Endothelial cell of umbilical vein (primary cell): ENCODE measurements at regions of chr2 and their contacts with region 1.

Region 1: DNA sequence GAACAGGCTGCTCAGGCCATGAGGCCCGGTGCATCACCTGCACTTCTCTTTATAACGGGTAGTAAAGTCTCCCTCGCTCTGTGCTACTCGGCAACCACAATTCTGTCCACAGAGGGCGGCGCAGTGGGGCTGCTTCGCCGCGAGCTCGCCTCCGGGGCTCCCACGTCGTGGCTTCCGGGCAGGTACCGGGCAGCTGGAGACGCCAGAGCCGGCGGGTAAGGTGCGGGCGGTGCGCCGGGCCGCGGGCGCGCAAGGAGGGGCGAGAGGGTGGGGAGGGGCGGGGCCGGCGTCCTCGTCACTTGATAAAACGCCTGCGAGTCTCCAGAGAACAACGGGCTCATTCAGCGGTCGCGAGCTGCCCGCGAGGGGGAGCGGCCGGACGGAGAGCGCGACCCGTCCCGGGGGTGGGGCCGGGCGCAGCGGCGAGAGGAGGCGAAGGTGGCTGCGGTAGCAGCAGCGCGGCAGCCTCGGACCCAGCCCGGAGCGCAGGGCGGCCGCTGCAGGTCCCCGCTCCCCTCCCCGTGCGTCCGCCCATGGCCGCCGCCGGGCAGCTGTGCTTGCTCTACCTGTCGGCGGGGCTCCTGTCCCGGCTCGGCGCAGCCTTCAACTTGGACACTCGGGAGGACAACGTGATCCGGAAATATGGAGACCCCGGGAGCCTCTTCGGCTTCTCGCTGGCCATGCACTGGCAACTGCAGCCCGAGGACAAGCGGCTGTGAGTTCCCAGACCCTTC is at the start of gene ITGA6:
- DNase-seq: peak; percentile 78
- H3K4me3 ChIP-seq: peak within 1 kb of the TSS; percentile 67 to 98 (median 68)
- H3K27ac ChIP-seq: peak within 1 kb of the TSS; percentile 52
- H3K4me1 ChIP-seq: peaks cover 40% of the 10 kb centered on the region
- H3K27me3 ChIP-seq: no peaks in the 10 kb centered on the region
- CTCF ChIP-seq: peak; percentile 4 to 33
- POLR2A ChIP-seq: peak; percentile 87
- total RNA-seq, gene ITGA6: 174 and 208 TPM in 2 replicates

Region 2: GRCh38 chr2:172172513-172173173 is 254.8 kb before region 1 on chr2:
- CTCF ChIA-PET with region 1: interaction called, 11 read pairs
- POLR2A ChIA-PET with region 1: no interaction called
- dilution Hi-C with region 1: loop called (anchors 25 kb)
- intact Hi-C with region 1: loop called (anchors 1 kb)
- DNase-seq: peak; percentile 52
- H3K4me3 ChIP-seq: peak overlapping the region; percentile 12 to 50 (median 50)
- H3K27ac ChIP-seq: no peak overlapping the region
- H3K4me1 ChIP-seq: peaks cover 4% of the 10 kb centered on the region
- H3K27me3 ChIP-seq: no peaks in the 10 kb centered on the region
- CTCF ChIP-seq: peak; percentile 83 to 90
- POLR2A ChIP-seq: no peak

Region 3: DNA sequence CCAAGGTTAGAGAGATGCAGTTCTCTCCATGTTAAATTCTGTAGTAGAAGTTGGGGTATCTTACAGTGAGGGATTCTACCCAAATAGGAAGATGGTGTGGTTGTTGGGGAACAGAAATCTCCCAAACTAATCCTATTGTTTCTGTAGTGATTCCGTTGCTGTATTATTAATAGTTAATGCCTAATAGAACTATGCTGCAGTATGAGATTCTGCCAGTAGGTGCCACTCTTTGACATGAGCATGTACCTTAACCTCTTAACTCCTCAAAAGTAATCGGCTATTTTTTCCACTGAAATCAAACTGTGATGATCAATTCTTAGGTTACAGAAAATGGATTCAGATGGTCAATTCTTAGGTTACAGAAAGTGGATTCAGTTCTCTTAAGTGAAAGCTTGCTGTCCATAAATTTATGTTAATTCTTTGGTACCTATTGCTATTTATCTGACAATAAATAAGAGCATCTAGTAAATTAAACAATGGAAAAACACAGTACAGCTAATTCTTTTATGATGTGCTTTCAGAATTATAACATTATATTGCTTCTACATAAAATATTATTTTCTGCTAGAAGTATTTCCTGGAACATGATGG is 226.8 kb before region 1 on chr2:
- CTCF ChIA-PET with region 1: no interaction called
- POLR2A ChIA-PET with region 1: no interaction called
- dilution Hi-C with region 1: loop called (anchors 25 kb)
- intact Hi-C with region 1: no loop called
- DNase-seq: peak; percentile 53
- H3K4me3 ChIP-seq: no peak overlapping the region
- H3K27ac ChIP-seq: no peak overlapping the region
- H3K4me1 ChIP-seq: no peaks in the 10 kb centered on the region
- H3K27me3 ChIP-seq: no peaks in the 10 kb centered on the region
- CTCF ChIP-seq: peak; percentile 42 to 47
- POLR2A ChIP-seq: no peak

Region 4: DNA sequence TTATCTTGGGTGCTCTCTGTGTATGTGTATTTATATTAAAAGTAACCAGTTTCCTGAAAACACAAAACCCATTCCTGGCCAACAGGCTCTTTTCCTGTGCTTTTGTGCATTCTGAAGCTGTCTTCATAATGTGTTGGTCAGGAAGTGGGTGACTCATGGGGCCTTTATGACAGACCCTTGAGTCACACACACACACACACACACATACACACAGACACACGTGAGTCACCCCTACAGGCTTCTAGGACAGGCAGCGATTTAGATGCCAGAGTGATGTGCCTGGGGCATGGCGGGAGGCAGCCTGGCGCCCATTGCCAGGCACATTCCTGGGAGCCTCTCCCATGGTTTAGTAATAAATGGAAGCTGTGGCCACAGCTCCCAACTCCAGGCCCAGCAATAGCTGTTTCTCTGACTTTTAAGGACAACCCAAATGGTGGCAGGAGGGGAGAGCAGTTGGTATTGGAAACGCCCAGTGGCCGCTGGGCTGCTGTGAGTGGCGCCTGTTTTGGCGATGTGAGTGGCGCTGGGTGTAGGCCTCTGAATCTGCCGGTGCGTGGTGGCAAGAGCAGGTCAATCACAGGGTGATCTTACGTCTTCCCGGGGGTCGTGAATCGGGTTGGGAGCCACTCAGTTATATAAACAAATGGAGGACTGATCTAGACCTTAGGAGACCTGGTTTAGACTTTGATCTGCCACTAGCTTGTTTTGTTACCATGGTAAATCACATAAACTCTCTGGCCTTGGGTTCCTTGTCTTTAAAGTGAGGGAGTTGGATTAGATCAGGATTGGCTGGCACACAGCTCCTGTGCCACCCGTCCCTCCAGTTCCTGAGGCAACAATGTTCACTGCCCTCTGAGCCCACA is 174.0 kb before region 1 on chr2:
- CTCF ChIA-PET with region 1: interaction called, 4 read pairs
- POLR2A ChIA-PET with region 1: no interaction called
- dilution Hi-C with region 1: no loop called
- intact Hi-C with region 1: loop called (anchors 5 kb)
- DNase-seq: peak; percentile 99
- H3K4me3 ChIP-seq: no peak overlapping the region
- H3K27ac ChIP-seq: peak overlapping the region; percentile 95
- H3K4me1 ChIP-seq: peaks cover 54% of the 10 kb centered on the region
- H3K27me3 ChIP-seq: no peaks in the 10 kb centered on the region
- CTCF ChIP-seq: no peak
- POLR2A ChIP-seq: peak; percentile 68

Region 5: DNA sequence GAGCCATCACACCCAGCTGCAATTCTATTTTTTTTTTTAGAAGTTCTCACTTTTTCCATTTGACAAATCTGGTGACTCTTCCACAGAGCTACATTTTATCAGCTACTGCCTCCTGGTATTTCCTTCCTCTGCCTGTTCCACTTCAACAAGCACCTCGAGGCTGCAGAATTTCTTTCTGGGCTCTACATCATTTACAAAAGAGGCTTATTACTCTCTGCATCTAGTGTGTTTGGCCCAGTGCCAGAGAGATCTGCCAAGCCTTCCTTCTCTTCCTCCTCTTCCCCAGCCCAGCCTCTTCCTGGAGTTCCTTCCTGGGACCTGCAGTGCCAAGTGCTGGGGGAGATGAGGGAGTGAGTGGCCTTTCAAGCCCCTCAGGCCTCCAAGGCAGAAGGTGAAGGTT is 119.6 kb before region 1 on chr2:
- CTCF ChIA-PET with region 1: interaction called, 4 read pairs
- POLR2A ChIA-PET with region 1: no interaction called
- dilution Hi-C with region 1: no loop called
- intact Hi-C with region 1: loop called (anchors 1 kb)
- DNase-seq: peak; percentile 94
- H3K4me3 ChIP-seq: no peak overlapping the region
- H3K27ac ChIP-seq: peak overlapping the region; percentile 88
- H3K4me1 ChIP-seq: peaks cover 31% of the 10 kb centered on the region
- H3K27me3 ChIP-seq: no peaks in the 10 kb centered on the region
- CTCF ChIP-seq: no peak
- POLR2A ChIP-seq: no peak

Region 6: GRCh38 chr2:172442072-172442895 is 14.9 kb after region 1 on chr2:
- CTCF ChIA-PET with region 1: interaction called, 112 read pairs
- POLR2A ChIA-PET with region 1: interaction called, 6 read pairs
- dilution Hi-C with region 1: no loop called
- intact Hi-C with region 1: loop called (anchors 1 kb)
- DNase-seq: peak; percentile 69
- H3K4me3 ChIP-seq: no peak overlapping the region
- H3K27ac ChIP-seq: peak overlapping the region; percentile 60
- H3K4me1 ChIP-seq: peaks cover 65% of the 10 kb centered on the region
- H3K27me3 ChIP-seq: no peaks in the 10 kb centered on the region
- CTCF ChIP-seq: no peak
- POLR2A ChIP-seq: no peak